Gastrocnemius medialis (tissue), 4 donors: ENCODE measurements at regions of chr10 and their contacts with region 1.

Region 1: GRCh38 chr10:94279835-94280709 is 82.7 kb downstream of the NOC3L start:
- DNase-seq: no peak
- ATAC-seq: peak; percentile 47 to 82
- H3K4me3 ChIP-seq: no peak overlapping the region
- H3K27ac ChIP-seq: no peak overlapping the region
- H3K4me1 ChIP-seq: peaks cover 5 to 6% of the 10 kb centered on the region in 2 donors
- H3K27me3 ChIP-seq: no peaks in the 10 kb centered on the region
- CTCF ChIP-seq: peak; percentile 69 to 89 (median 72)
- POLR2A ChIP-seq: no peak

Region 2: DNA sequence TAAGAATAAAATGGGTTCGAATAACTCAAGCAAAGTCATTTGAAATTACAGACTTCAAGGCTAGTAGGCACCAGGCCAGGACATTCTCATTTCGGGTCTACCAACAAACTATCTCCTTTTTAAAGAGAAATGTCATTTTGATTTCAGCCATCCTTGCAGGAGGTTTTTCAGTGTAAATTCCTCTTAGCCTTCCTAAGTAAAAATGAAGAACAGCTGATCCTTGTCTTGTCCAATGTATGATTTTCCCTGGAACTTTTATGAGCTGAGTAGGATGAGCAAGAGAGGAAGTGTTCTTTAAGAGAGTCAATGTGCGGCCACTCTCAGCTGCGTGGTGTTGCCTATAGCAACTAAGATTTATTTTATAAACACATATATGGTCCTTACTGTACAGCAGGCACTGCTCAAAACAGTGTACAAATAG is 176.3 kb before region 1 on chr10:
- in situ Hi-C with region 1: no loop called
- intact Hi-C with region 1: no loop called
- DNase-seq: no peak
- ATAC-seq: no peak
- H3K4me3 ChIP-seq: no peak overlapping the region
- H3K27ac ChIP-seq: no peak overlapping the region
- H3K4me1 ChIP-seq: peaks cover 5 to 10% of the 10 kb centered on the region in 2 donors
- H3K27me3 ChIP-seq: no peaks in the 10 kb centered on the region
- CTCF ChIP-seq: no peak
- POLR2A ChIP-seq: no peak

Region 3: GRCh38 chr10:94320285-94320914 is 40.3 kb after region 1 on chr10:
- in situ Hi-C with region 1: no loop called
- intact Hi-C with region 1: loop called (anchors 2 kb)
- DNase-seq: peak; percentile 25 to 36
- ATAC-seq: peak in 1 of 2 donors; percentile 55
- H3K4me3 ChIP-seq: no peak overlapping the region
- H3K27ac ChIP-seq: no peak overlapping the region
- H3K4me1 ChIP-seq: no peaks in the 10 kb centered on the region
- H3K27me3 ChIP-seq: no peaks in the 10 kb centered on the region
- CTCF ChIP-seq: peak; percentile 63 to 86 (median 79)
- POLR2A ChIP-seq: no peak